MCF 10A (cell line): ENCODE measurements at regions of chr9 and their contacts with region 1.

Region 1: GRCh38 chr9:14768405-14769229 is 46.1 kb upstream of the CER1 start:
- DNase-seq: peak; percentile 61
- H3K4me3 Mint-ChIP-seq: no peak overlapping the region
- H3K27ac Mint-ChIP-seq: peak overlapping the region; percentile 31
- H3K4me1 Mint-ChIP-seq: no peaks in the 10 kb centered on the region
- H3K27me3 Mint-ChIP-seq: peaks cover 59% of the 10 kb centered on the region
- CTCF ChIP-seq: peak; percentile 67

Region 2: GRCh38 chr9:14466429-14466818 is 302.2 kb before region 1 on chr9:
- CTCF ChIA-PET with region 1: interaction called, 27 read pairs
- POLR2A ChIA-PET with region 1: no interaction called
- intact Hi-C with region 1: loop called (anchors 1 kb)
- DNase-seq: no peak
- H3K4me3 Mint-ChIP-seq: no peak overlapping the region
- H3K27ac Mint-ChIP-seq: no peak overlapping the region
- H3K4me1 Mint-ChIP-seq: no peaks in the 10 kb centered on the region
- H3K27me3 Mint-ChIP-seq: peaks cover 47% of the 10 kb centered on the region
- CTCF ChIP-seq: no peak

Region 3: DNA sequence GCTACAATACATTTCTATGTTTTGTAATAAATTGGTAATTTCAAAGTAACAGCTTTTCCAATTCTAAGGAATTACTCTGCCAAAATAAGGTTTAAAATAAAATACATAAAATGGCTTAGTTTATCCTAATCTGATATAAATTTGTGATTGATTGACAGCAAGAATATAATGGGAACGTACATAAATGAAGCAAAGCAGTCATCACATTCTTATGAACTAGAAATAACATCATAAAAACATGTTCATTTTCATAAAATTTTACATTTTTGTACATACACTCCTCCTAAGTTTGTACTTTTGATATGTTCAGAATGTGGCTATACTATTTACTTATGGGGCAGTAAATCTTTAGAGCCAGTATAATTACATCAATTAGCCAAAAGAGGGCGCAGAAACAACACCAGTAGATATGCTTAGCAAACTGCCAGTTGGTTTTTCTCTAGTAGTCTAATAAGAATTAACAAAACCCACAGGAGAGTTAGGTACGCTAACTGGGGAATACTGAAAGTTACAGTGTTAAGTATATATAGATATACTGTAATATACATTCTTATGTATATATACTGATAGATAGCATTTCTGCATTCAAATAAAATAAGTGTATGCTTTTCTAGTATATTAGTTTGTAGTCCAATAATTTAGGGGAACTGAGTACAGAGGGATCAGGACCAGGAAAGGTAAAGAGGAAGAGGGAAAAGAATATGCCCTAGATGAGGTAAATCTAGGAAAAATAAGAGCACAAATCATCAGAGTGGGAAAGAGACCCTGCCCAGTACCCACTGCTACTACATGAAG is 152.2 kb before region 1 on chr9:
- CTCF ChIA-PET with region 1: interaction called, 102 read pairs
- POLR2A ChIA-PET with region 1: no interaction called
- intact Hi-C with region 1: loop called (anchors 1 kb)
- DNase-seq: peak; percentile 65
- H3K4me3 Mint-ChIP-seq: no peak overlapping the region
- H3K27ac Mint-ChIP-seq: no peak overlapping the region
- H3K4me1 Mint-ChIP-seq: no peaks in the 10 kb centered on the region
- H3K27me3 Mint-ChIP-seq: no peaks in the 10 kb centered on the region
- CTCF ChIP-seq: peak; percentile 66

Region 4: DNA sequence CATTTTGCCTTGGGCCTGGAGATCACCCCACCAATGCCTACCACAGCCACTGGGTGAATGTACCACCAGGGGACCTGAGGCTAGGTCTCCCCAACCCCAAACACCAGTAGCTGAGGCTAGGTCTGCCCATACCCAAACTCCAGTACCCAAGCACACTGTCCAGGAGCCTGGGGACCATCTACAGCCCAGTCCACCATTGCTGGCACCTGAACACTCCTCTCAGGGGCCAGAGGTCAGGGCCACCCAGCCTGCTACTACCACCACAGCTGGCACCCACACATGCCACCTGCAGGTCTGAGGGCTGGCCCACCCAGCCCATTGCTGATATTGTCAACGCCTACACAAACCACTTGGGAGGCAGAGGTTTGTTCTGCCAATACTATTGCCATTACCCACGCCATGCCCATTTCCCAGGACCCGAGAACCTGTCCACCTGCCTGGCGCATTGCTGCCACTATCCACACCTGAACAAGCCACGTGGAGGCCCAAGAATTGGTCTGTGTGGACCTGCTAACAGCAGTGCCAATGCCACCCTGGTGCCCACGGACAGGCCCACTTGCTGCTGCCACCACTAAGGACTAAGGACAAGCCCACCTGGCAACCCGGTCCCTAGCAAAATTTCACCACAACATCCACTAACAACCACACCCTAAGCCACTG is 134.6 kb before region 1 on chr9:
- CTCF ChIA-PET with region 1: no interaction called
- POLR2A ChIA-PET with region 1: no interaction called
- intact Hi-C with region 1: no loop called
- DNase-seq: no peak
- H3K4me3 Mint-ChIP-seq: no peak overlapping the region
- H3K27ac Mint-ChIP-seq: no peak overlapping the region
- H3K4me1 Mint-ChIP-seq: no peaks in the 10 kb centered on the region
- H3K27me3 Mint-ChIP-seq: no peaks in the 10 kb centered on the region
- CTCF ChIP-seq: no peak

Region 5: DNA sequence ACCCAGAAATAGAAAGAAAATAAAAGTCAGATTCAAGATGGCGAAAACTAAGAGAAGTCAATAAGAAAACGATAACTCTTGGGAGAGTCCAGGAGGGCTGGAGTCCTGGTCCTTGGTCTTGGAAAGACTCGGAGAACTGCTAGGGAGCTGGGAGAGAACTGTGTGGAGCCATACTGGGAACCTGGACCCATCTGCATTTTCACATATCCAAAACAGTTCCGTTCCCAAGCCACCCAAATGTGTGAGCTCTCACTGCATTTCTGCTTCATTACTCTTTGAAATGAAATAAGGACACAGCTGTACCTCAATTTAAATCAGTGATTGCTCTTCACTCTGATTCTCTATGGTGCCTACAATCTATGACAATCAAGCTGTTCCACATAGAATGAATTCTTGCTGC is 22.0 kb after region 1 on chr9:
- CTCF ChIA-PET with region 1: interaction called, 12 read pairs
- POLR2A ChIA-PET with region 1: no interaction called
- intact Hi-C with region 1: no loop called
- DNase-seq: no peak
- H3K4me3 Mint-ChIP-seq: no peak overlapping the region
- H3K27ac Mint-ChIP-seq: no peak overlapping the region
- H3K4me1 Mint-ChIP-seq: no peaks in the 10 kb centered on the region
- H3K27me3 Mint-ChIP-seq: peaks cover 60% of the 10 kb centered on the region
- CTCF ChIP-seq: no peak

Region 6: DNA sequence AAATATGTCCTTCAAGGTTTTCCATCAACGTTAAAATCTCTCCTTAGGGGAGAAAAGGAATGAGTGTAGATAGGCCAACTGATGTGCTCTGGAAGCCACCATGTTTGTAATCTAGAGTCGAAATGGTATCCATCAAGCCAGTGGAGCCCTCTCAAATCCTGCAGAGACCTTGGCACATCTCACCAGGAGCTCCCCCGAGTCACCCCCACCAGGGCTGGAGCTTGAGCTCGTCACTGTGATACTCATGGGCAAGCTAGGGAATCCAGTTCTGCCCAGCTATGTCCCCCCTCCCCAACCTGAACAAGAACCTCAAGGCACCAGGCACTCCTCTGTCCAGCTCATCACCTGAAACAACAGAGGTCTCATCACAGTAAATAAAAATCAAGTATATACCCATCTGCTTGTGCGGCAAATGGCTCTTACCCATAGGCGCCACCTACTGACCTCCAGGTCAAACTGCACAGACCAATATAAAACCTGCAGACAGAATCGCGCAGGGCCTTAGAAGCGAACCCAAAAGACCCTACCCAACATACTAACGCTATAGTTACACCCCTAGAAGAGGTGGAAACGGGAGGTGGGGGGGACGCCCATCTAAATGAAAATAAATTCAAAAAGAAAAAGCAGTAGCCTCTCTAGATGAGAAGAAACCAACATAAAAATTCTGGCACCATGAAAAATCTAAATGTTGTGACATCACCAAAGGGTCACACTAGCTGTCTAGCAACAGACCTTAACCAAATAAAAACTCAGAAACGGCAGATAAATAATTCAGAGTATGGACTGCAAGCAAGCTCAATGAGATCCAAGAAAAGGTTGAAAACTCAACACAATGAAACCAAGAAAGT is 463.4 kb after region 1 on chr9:
- CTCF ChIA-PET with region 1: no interaction called
- POLR2A ChIA-PET with region 1: no interaction called
- intact Hi-C with region 1: no loop called
- DNase-seq: peak; percentile 50
- H3K4me3 Mint-ChIP-seq: no peak overlapping the region
- H3K27ac Mint-ChIP-seq: peak overlapping the region; percentile 44
- H3K4me1 Mint-ChIP-seq: no peaks in the 10 kb centered on the region
- H3K27me3 Mint-ChIP-seq: no peaks in the 10 kb centered on the region
- CTCF ChIP-seq: peak; percentile 44

Region 7: DNA sequence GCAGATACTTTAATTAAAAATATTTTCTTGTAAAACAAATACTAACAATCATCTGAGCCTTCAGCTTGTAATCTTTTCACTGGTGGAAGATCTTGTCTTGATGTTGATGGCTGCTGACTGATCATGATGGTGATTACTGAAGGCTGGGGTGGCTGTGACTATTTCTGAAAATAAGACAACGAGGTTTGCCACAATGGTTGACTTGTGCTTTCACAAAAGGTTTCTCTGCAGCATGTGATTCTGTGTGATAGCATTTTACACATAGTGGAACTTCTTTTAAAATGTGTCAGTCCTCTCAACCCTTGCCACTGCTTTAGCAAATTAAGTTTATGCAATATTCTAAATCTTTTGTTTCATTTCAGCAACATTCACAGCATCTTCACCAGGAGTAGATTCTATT is 1245.2 kb after region 1 on chr9:
- CTCF ChIA-PET with region 1: no interaction called
- POLR2A ChIA-PET with region 1: no interaction called
- intact Hi-C with region 1: no loop called
- DNase-seq: no peak
- H3K4me3 Mint-ChIP-seq: no peak overlapping the region
- H3K27ac Mint-ChIP-seq: no peak overlapping the region
- H3K4me1 Mint-ChIP-seq: peaks cover 7% of the 10 kb centered on the region
- H3K27me3 Mint-ChIP-seq: no peaks in the 10 kb centered on the region
- CTCF ChIP-seq: no peak